ENCODE measurements at regions of chr17 and their contacts with region 1.

Region 1: DNA sequence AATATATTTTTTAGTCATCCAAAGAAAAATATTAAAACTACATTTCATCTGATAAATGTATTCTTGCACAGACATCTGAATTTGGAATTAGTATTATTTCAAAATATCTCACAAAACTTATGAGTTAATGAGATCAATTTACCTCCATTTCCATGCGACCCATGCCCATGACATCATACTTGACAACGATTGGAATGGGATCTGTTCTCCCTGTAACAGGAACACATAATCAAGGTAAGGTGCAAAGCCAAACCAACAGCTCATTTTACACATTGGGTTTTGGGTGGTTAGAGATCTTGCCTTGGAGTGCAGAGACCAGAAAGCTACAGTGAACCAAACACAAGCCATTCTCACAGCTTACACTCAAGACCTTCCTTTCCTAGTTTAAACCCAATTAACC is 46.9 kb upstream of the ITGA2B start:
- DNase-seq: no peak
- ATAC-seq: no peak
- H3K4me3 Mint-ChIP-seq: no peak overlapping the region
- H3K27ac Mint-ChIP-seq: no peak overlapping the region
- H3K4me1 Mint-ChIP-seq: peaks cover 8% of the 10 kb centered on the region
- H3K27me3 Mint-ChIP-seq: no peaks in the 10 kb centered on the region
- CTCF ChIP-seq: no peak

Region 2: DNA sequence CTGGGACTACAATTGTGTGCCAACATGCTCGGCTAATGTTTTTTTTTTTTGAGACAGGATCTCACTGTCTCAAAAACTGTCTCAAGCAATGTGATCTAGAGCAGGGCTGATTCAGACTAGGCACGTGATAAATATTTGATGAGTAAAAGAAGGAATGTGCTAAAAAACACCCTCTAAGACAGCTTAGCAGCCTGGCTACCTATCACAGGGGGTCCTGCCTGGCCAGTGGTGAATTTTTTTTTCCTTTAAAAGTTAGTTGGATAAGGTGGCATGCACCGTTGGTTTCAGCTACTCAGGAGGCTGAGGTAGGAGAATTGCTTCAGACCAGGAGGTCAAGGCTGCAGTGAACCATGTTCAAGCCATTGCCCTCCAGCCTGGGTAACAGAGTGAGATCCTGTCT is 81.7 kb after region 1 on chr17:
- CTCF ChIA-PET with region 1: no interaction called
- POLR2A ChIA-PET with region 1: interaction called, 11 read pairs
- intact Hi-C with region 1: no loop called
- DNase-seq: no peak
- ATAC-seq: no peak
- H3K4me3 Mint-ChIP-seq: no peak overlapping the region
- H3K27ac Mint-ChIP-seq: no peak overlapping the region
- H3K4me1 Mint-ChIP-seq: no peaks in the 10 kb centered on the region
- H3K27me3 Mint-ChIP-seq: peaks cover 17% of the 10 kb centered on the region
- CTCF ChIP-seq: no peak

Measured in activated B cell treated with CpG ODN at 0.5 μM for 24 hours (primary cell).